Endothelial cell of umbilical vein (primary cell): ENCODE measurements at regions of chr11 and their contacts with region 1.

Region 1: DNA sequence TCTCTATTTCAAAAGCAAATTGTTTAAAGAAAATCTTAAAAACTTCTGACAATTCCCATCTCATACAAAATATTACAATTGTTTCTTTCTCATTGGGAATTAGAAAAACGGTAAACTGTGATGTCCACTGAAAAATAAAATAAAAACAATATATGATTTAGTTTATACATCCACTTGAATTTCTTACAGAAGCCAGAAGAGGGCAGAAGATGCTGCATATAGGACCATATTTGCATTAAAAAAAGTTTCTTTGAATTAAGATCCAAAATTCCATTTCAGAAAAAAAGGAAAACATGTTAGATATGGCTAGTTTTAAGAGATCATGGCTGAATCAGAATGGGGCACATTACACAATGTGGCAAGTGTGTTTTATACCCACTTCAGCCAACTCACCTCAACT is 39.3 kb upstream of the LRRC4C start:
- DNase-seq: peak; percentile 26
- H3K4me3 ChIP-seq: no peak overlapping the region
- H3K27ac ChIP-seq: no peak overlapping the region
- H3K4me1 ChIP-seq: no peaks in the 10 kb centered on the region
- H3K27me3 ChIP-seq: no peaks in the 10 kb centered on the region
- CTCF ChIP-seq: peak in 1 of 2 donors; percentile 4
- POLR2A ChIP-seq: no peak

Region 2: GRCh38 chr11:41446107-41446506 is 52.6 kb before region 1 on chr11:
- CTCF ChIA-PET with region 1: no interaction called
- POLR2A ChIA-PET with region 1: no interaction called
- dilution Hi-C with region 1: no loop called
- intact Hi-C with region 1: no loop called
- DNase-seq: no peak
- H3K4me3 ChIP-seq: no peak overlapping the region
- H3K27ac ChIP-seq: no peak overlapping the region
- H3K4me1 ChIP-seq: no peaks in the 10 kb centered on the region
- H3K27me3 ChIP-seq: no peaks in the 10 kb centered on the region
- CTCF ChIP-seq: no peak
- POLR2A ChIP-seq: no peak

Region 3: DNA sequence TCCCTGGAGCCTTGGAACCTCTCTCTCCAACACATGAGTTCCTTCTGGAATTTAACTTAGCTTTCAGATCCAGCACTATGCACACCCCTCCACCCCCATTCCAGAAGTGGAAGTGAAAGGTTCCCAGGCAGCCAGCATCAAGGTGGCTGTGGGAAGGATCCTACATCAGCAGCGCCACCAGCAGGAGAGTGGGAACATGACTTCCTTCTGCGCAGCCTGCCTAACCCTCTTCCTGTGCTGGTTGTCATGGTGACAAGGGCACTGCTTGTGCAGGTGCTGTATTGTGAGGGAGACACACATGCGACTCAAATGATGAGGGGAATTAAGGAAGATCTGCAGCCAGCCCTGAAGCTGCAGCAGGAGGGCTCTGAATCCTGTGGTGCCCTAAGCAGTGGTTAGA is 908.6 kb after region 1 on chr11:
- CTCF ChIA-PET with region 1: no interaction called
- POLR2A ChIA-PET with region 1: no interaction called
- dilution Hi-C with region 1: no loop called
- intact Hi-C with region 1: loop called (anchors 10 kb)
- DNase-seq: peak; percentile 13
- H3K4me3 ChIP-seq: no peak overlapping the region
- H3K27ac ChIP-seq: no peak overlapping the region
- H3K4me1 ChIP-seq: no peaks in the 10 kb centered on the region
- H3K27me3 ChIP-seq: no peaks in the 10 kb centered on the region
- CTCF ChIP-seq: peak in 1 of 2 donors; percentile 43
- POLR2A ChIP-seq: no peak